ENCODE measurements at regions of chr11 and their contacts with region 1.

Region 1: GRCh38 chr11:61679893-61680621 is at the start of gene DAGLA:
- DNase-seq: peak; percentile 50 to 88 (median 75)
- ATAC-seq: peak; percentile 72
- H3K4me3 ChIP-seq: peak within 1 kb of the TSS; percentile 19
- H3K4me3 Mint-ChIP-seq: peak within 1 kb of the TSS; percentile 77
- H3K27ac ChIP-seq: no peak within 1 kb of the TSS
- H3K27ac Mint-ChIP-seq: no peak within 1 kb of the TSS
- H3K4me1 ChIP-seq: peaks cover 27% of the 10 kb centered on the region
- H3K4me1 Mint-ChIP-seq: no peaks in the 10 kb centered on the region
- H3K27me3 ChIP-seq: peaks cover 3% of the 10 kb centered on the region in 2 experiments
- H3K27me3 Mint-ChIP-seq: peaks cover 24% of the 10 kb centered on the region
- CTCF ChIP-seq: peak; percentile 78
- total RNA-seq, gene DAGLA: 0.52 to 0.73 TPM

Region 2: DNA sequence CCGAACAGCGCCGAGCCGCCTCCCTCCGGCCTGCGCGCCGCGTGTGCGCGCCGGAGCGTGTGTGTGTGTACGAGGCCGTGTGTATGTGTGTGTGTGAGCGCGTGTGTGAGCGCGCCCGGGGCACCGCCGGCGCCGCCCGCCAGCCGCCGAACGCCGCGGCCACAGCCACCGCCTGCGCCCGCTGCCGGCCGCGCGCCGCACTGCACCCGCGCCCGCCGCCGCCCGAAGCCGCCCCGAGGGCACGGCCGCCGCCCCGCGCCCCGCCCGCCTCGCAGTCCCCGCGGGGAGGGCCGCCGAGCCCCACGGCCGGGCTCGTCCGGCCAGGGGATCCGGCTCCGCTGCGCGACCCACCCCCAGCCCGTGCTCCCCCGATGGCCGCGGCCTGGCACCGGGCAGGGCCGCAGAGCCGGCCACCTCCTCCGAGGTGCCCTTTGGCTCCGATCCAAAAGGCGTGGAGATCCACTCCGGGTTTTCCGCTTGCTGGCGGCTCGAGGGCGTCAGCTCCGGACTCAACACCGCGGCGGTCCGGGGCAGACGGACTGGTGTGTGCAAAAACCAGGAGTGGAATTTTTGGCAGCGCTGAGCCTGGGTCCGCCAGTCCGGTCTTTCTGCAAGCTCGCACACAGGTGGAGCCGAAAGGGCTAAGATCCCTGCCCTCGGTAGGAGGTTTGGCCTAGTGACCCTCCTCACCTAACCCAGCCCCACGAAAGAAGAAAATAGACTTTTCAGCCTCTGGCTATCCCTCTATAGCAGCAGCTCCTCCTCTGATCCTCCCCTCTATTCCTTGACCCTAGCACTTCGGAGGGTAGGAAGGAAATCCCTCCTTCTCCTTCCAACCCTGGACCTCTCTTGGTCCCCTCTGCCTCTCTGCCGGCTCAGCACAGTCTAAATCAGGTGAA is 98.8 kb before region 1 on chr11 and contains the start of gene SYT7:
- CTCF ChIA-PET with region 1: no interaction called
- POLR2A ChIA-PET with region 1: no interaction called
- intact Hi-C with region 1: loop called in 1 of 2 experiments (anchors 5 kb)
- DNase-seq: peak; percentile 86 to 96 (median 94)
- ATAC-seq: peak; percentile 86
- H3K4me3 ChIP-seq: peak within 1 kb of the TSS; percentile 28
- H3K4me3 Mint-ChIP-seq: peak within 1 kb of the TSS; percentile 97
- H3K27ac ChIP-seq: no peak within 1 kb of the TSS
- H3K27ac Mint-ChIP-seq: peak within 1 kb of the TSS; percentile 78
- H3K4me1 ChIP-seq: peaks cover 19% of the 10 kb centered on the region
- H3K4me1 Mint-ChIP-seq: peaks cover 9% of the 10 kb centered on the region
- H3K27me3 ChIP-seq: peaks cover 23 to 27% of the 10 kb centered on the region in 2 experiments
- H3K27me3 Mint-ChIP-seq: peaks cover 57% of the 10 kb centered on the region
- CTCF ChIP-seq: no peak
- total RNA-seq, gene SYT7: not detected

Region 3: DNA sequence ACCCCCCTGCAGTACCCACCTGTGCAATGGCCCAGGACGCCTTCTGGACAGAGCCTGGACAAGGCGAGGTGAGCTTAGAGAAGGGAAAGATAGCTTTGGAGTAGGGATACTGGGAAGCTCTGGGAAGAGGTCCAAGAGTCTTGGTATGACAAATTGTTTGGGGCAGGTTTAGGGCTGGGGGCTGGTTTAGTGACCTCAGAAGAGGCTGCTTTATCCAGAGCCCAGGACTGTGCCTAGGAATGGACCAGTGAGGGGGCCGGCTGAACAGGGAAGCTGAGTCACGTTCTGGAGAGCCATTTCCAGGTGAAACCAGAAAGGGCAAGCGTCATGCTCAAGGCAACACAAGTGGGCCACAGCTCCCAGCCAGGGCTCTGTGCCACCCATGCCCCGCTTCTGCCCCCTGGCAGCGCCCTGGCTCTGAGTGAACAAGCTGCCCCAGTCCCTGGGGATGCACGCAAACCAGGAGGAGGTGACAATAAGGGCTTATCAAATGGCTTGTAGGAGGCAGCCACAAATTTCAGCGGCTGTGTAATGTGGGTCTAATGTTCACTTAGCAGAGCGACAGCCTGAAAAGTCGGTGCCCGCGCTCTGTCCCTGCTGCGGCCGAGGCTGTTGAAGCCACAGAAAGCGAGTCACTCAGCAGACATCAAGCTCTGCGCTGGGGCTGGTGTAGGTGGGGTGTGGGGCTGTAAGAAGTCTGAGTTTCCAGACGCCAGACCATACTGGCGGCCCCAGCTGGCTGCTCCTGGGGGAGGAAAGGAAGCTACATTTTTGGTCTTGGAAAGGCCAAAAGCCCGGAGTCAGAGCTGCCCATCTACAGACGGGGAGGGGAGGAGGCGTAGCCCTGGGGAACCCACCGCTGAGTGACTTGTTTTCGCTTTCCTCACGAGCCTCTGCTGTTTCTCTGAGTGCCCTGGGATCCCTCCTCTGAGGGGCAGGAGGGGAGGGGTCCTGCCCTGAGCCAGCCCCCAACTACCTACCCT is 80.9 kb before region 1 on chr11:
- CTCF ChIA-PET with region 1: no interaction called
- POLR2A ChIA-PET with region 1: no interaction called
- intact Hi-C with region 1: no loop called
- DNase-seq: no peak
- ATAC-seq: no peak
- H3K4me3 ChIP-seq: no peak overlapping the region
- H3K4me3 Mint-ChIP-seq: no peak overlapping the region
- H3K27ac ChIP-seq: no peak overlapping the region
- H3K27ac Mint-ChIP-seq: no peak overlapping the region
- H3K4me1 ChIP-seq: no peaks in the 10 kb centered on the region
- H3K4me1 Mint-ChIP-seq: no peaks in the 10 kb centered on the region
- H3K27me3 ChIP-seq: peaks cover 2 to 6% of the 10 kb centered on the region in 2 experiments
- H3K27me3 Mint-ChIP-seq: peaks cover 22% of the 10 kb centered on the region
- CTCF ChIP-seq: no peak

Region 4: GRCh38 chr11:61695917-61696316 is 15.9 kb after region 1 on chr11:
- CTCF ChIA-PET with region 1: no interaction called
- POLR2A ChIA-PET with region 1: interaction called, 5 read pairs
- intact Hi-C with region 1: loop called in 1 of 2 experiments (anchors 2 kb)
- DNase-seq: peak; percentile 78 to 98 (median 89)
- ATAC-seq: peak; percentile 99
- H3K4me3 ChIP-seq: peak overlapping the region; percentile 32
- H3K4me3 Mint-ChIP-seq: peak overlapping the region; percentile 53
- H3K27ac ChIP-seq: peak overlapping the region in 1 of 2 donors; percentile 27
- H3K27ac Mint-ChIP-seq: peak overlapping the region; percentile 85
- H3K4me1 ChIP-seq: peaks cover 45% of the 10 kb centered on the region
- H3K4me1 Mint-ChIP-seq: peaks cover 22% of the 10 kb centered on the region
- H3K27me3 ChIP-seq: no peaks in the 10 kb centered on the region
- H3K27me3 Mint-ChIP-seq: no peaks in the 10 kb centered on the region
- CTCF ChIP-seq: peak; percentile 33

Measured in CD4-positive, alpha-beta T cell (primary cell).